Activated naive CD4-positive, alpha-beta T cell treated with anti-CD3 and anti-CD28 coated beads for 36 hours (primary cell): ENCODE measurements at regions of chr18 and their contacts with region 1.

Region 1: GRCh38 chr18:56650944-56651770 is at the start of gene WDR7:
- DNase-seq: peak; percentile 97
- H3K4me3 Mint-ChIP-seq: peak within 1 kb of the TSS; percentile 93
- H3K27ac Mint-ChIP-seq: peak within 1 kb of the TSS; percentile 95
- H3K4me1 Mint-ChIP-seq: peaks cover 42% of the 10 kb centered on the region
- H3K27me3 Mint-ChIP-seq: no peaks in the 10 kb centered on the region
- total RNA-seq, gene WDR7: 17.3 to 19.5 TPM

Region 2: DNA sequence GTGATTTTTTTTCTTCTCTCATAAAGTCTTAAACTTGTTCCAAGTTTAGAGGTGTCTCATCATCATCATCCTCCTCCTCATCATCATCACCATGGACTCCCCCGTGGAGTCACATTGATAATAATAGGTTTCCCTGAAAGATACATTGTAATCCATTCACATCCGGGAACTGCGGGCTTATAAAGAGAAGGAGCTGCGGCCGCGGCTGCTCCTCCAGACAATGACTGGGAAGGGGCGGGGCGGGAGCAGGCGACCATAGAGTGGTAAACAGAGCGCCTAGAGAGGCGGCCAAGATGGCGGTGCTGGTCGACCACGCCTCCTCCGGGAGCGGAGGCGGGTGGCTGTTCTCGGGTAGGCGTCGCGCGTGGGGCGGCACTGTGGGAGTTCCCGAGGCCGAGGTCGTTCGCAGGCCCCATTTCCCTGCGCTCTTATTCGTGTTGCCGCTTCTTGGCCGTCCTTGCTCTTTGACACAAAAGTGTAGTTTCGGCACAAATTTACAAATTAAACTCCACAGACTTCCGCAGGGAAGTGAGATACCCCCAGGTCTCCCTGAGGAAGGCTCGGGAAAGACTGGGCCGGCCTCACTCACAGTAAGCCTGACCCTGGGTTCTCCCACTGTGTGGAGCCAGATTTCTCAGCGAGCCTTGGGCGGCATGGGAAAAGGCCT is 1061.4 kb before region 1 on chr18:
- CTCF ChIA-PET with region 1: no interaction called
- intact Hi-C with region 1: loop called (anchors 1 kb)
- DNase-seq: peak; percentile 86
- H3K4me3 Mint-ChIP-seq: peak overlapping the region; percentile 70
- H3K27ac Mint-ChIP-seq: no peak overlapping the region
- H3K4me1 Mint-ChIP-seq: peaks cover 19% of the 10 kb centered on the region
- H3K27me3 Mint-ChIP-seq: peaks cover 59% of the 10 kb centered on the region

Region 3: DNA sequence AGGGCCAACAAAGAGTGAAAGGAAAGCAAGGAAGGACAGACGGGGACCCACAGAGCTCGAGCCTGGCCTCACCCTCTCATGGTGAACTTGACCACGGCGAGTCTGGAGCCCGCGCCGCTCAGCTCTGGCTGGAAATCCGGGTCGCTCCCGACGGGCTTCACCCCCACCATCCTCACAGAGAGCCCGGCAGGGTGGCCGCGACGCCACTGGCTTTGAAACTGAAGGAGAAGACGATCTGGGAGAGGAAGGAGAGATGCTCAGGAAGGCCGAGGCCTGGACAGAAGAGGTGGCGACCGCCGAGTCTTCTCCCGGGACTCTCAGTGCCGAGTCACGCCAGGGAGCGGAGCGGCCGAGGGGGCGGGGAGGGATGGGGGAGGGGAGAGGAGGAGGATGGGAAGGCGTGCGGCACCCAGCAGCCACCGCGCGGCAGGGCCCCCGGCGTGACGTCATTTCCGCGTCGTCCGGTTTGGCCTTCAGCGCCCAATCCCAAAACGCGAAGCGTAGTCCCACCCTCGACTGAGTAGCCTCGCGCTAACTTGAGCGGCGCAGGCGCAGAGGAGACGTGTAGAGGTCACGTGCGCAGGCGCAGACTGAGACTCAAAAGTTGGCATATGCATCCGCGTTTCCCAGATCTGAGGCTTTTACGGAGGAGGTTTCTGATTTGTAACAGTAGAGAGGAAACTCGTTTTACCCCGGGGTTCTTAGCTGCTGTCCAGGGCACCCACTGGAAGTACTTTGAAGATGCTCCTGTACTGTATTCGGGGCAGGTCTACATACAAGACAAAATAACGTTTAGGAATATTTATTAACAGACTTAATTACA is 12.7 kb before region 1 on chr18 and contains the start of gene TXNL1:
- CTCF ChIA-PET with region 1: interaction called, 6 read pairs
- intact Hi-C with region 1: loop called (anchors 1 kb)
- DNase-seq: peak; percentile 99
- H3K4me3 Mint-ChIP-seq: peak within 1 kb of the TSS; percentile 90
- H3K27ac Mint-ChIP-seq: peak within 1 kb of the TSS; percentile 95
- H3K4me1 Mint-ChIP-seq: peaks cover 38% of the 10 kb centered on the region
- H3K27me3 Mint-ChIP-seq: no peaks in the 10 kb centered on the region
- total RNA-seq, gene TXNL1: 64.1 to 68.6 TPM

Region 4: GRCh38 chr18:56709463-56709862 is 58.3 kb after region 1 on chr18:
- CTCF ChIA-PET with region 1: interaction called, 10 read pairs
- intact Hi-C with region 1: loop called (anchors 1 kb)
- DNase-seq: peak; percentile 56
- H3K4me3 Mint-ChIP-seq: no peak overlapping the region
- H3K27ac Mint-ChIP-seq: no peak overlapping the region
- H3K4me1 Mint-ChIP-seq: peaks cover 3% of the 10 kb centered on the region
- H3K27me3 Mint-ChIP-seq: no peaks in the 10 kb centered on the region

Region 5: GRCh38 chr18:57004366-57005121 is 353.4 kb after region 1 on chr18:
- CTCF ChIA-PET with region 1: no interaction called
- intact Hi-C with region 1: loop called (anchors 1 kb)
- DNase-seq: no peak
- H3K4me3 Mint-ChIP-seq: no peak overlapping the region
- H3K27ac Mint-ChIP-seq: no peak overlapping the region
- H3K4me1 Mint-ChIP-seq: peaks cover 23% of the 10 kb centered on the region
- H3K27me3 Mint-ChIP-seq: no peaks in the 10 kb centered on the region

Region 6: GRCh38 chr18:57015451-57015850 is 364.3 kb after region 1 on chr18:
- CTCF ChIA-PET with region 1: no interaction called
- intact Hi-C with region 1: loop called (anchors 1 kb)
- DNase-seq: no peak
- H3K4me3 Mint-ChIP-seq: no peak overlapping the region
- H3K27ac Mint-ChIP-seq: no peak overlapping the region
- H3K4me1 Mint-ChIP-seq: peaks cover 23% of the 10 kb centered on the region
- H3K27me3 Mint-ChIP-seq: no peaks in the 10 kb centered on the region

Region 7: GRCh38 chr18:57621246-57621604 is 970.1 kb after region 1 on chr18:
- CTCF ChIA-PET with region 1: no interaction called
- intact Hi-C with region 1: loop called (anchors 1 kb)
- DNase-seq: peak; percentile 28
- H3K4me3 Mint-ChIP-seq: peak overlapping the region; percentile 98
- H3K27ac Mint-ChIP-seq: peak overlapping the region; percentile 95
- H3K4me1 Mint-ChIP-seq: peaks cover 32% of the 10 kb centered on the region
- H3K27me3 Mint-ChIP-seq: no peaks in the 10 kb centered on the region